Left ventricle myocardium superior (tissue), 1 donor: ENCODE measurements at regions of chr16 and their contacts with region 1.

Region 1: DNA sequence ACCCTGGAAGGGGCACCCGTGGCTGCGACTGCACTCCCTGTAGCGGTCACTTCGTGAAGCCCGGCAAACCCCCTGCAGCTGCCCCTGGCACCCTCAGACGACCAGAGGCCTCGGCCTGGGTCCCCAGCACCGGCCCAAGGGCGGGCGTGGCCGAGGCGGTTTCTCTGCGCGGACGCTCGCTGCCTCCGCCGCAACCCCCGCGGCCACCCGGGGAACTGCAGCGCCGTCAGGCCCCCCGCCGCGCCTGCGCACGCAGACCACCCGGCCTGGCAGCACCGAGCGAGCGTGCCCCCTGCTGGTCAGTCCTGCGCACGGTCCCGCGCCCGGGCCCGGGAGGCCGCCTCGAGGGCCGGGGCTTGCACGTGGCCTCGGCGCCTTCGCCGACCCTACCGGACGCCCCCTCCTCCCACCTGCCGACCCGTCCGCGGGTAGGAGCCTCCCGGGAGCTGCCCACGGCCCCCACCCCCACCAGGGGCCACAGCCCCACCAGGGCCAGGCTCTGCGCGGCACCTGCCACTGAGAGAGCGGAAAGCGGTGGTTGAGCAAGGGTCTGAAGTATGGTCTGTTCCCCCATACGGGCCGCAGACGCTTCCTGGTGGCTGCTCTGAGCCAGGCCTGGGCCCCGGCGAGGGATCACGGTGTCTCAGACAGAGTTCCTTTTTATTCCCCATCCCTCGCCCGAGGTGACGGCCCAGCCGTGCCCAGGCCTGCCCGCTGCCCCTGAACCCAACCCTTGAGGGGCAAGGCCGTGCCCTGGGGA is 11.5 kb upstream of the HS3ST6 start:
- DNase-seq: peak; percentile 96
- ATAC-seq: peak; percentile 96

Region 2: GRCh38 chr16:1832838-1833454 is 96.8 kb before region 1 on chr16:
- intact Hi-C with region 1: no loop called
- DNase-seq: no peak
- ATAC-seq: no peak

Region 3: GRCh38 chr16:1863681-1864460 is 65.9 kb before region 1 on chr16:
- intact Hi-C with region 1: loop called (anchors 10 kb)
- DNase-seq: no peak
- ATAC-seq: no peak